ENCODE measurements at regions of chr9 and their contacts with region 1.

Region 1: DNA sequence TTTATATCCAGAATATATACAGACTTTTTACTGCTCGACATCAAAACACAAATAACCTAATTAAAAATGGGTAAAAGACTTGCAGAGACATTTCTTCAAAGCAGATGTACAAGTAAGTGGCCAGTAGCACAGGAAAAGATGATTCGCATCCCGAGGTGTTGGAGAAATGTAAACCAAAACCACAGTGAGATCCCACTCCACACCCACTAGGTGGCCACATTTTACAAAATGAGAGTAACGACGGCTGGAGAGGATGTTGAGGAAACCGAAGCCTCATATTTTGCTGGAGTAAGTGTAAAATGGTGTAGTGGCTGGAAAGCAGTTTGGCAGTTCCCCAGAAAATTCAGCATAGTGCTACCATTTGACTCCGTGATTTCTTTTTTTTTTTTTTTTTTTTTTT is 21.2 kb upstream of the GBGT1 start:
- DNase-seq: peak; percentile 43 to 76
- ATAC-seq: peak; percentile 57 to 77 (median 70)
- H3K4me3 ChIP-seq: no peak overlapping the region
- H3K4me3 Mint-ChIP-seq: peak overlapping the region; percentile 80
- H3K27ac ChIP-seq: no peak overlapping the region
- H3K27ac Mint-ChIP-seq: peak overlapping the region; percentile 62 to 78
- H3K4me1 ChIP-seq: peaks cover 19% of the 10 kb centered on the region
- H3K4me1 Mint-ChIP-seq: peaks cover 19% of the 10 kb centered on the region in 2 donors
- H3K27me3 ChIP-seq: no peaks in the 10 kb centered on the region
- H3K27me3 Mint-ChIP-seq: peaks cover 18 to 20% of the 10 kb centered on the region in 2 donors
- CTCF ChIP-seq: no peak

Region 2: GRCh38 chr9:133103183-133103986 is 81.6 kb before region 1 on chr9:
- intact Hi-C with region 1: loop called (anchors 1 kb)
- DNase-seq: peak; percentile 71
- ATAC-seq: peak; percentile 69 to 81 (median 80)
- H3K4me3 ChIP-seq: no peak overlapping the region
- H3K4me3 Mint-ChIP-seq: no peak overlapping the region
- H3K27ac ChIP-seq: peak overlapping the region; percentile 15
- H3K27ac Mint-ChIP-seq: peak overlapping the region; percentile 85 to 87
- H3K4me1 ChIP-seq: peaks cover 5% of the 10 kb centered on the region
- H3K4me1 Mint-ChIP-seq: peaks cover 0 to 6% of the 10 kb centered on the region in 2 donors
- H3K27me3 ChIP-seq: no peaks in the 10 kb centered on the region
- H3K27me3 Mint-ChIP-seq: no peaks in the 10 kb centered on the region
- CTCF ChIP-seq: peak; percentile 97

Region 3: DNA sequence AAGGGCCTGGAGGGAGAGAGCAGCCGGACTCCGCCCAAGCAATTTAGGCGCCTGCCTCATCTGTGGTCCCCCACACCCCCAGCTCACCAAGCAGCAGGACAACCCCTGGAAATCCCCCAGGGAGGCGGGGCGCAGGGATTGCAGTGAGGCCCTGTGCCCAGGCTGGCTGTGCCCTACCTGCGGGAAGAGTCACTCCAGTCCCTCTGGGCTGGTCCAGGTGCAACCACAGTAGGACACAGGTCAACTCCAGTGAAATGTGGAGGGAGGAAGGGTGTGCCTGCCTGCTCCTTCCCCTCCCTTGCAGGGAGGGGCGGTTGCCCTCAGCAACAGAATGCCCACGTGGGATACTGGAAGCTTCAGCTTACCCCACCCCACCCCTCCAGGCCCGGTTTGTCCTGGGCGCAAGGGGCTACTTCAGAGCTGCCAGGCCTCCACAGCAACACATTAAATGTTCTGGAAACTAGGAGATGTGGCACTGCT is 67.4 kb after region 1 on chr9:
- intact Hi-C with region 1: no loop called
- DNase-seq: no peak
- ATAC-seq: peak in 1 of 3 donors; percentile 64
- H3K4me3 ChIP-seq: no peak overlapping the region
- H3K4me3 Mint-ChIP-seq: no peak overlapping the region
- H3K27ac ChIP-seq: no peak overlapping the region
- H3K27ac Mint-ChIP-seq: peak overlapping the region in 1 of 2 donors; percentile 15
- H3K4me1 ChIP-seq: peaks cover 6% of the 10 kb centered on the region
- H3K4me1 Mint-ChIP-seq: peaks cover 6 to 7% of the 10 kb centered on the region in 2 donors
- H3K27me3 ChIP-seq: no peaks in the 10 kb centered on the region
- H3K27me3 Mint-ChIP-seq: peaks cover 0 to 12% of the 10 kb centered on the region in 2 donors
- CTCF ChIP-seq: no peak

Region 4: DNA sequence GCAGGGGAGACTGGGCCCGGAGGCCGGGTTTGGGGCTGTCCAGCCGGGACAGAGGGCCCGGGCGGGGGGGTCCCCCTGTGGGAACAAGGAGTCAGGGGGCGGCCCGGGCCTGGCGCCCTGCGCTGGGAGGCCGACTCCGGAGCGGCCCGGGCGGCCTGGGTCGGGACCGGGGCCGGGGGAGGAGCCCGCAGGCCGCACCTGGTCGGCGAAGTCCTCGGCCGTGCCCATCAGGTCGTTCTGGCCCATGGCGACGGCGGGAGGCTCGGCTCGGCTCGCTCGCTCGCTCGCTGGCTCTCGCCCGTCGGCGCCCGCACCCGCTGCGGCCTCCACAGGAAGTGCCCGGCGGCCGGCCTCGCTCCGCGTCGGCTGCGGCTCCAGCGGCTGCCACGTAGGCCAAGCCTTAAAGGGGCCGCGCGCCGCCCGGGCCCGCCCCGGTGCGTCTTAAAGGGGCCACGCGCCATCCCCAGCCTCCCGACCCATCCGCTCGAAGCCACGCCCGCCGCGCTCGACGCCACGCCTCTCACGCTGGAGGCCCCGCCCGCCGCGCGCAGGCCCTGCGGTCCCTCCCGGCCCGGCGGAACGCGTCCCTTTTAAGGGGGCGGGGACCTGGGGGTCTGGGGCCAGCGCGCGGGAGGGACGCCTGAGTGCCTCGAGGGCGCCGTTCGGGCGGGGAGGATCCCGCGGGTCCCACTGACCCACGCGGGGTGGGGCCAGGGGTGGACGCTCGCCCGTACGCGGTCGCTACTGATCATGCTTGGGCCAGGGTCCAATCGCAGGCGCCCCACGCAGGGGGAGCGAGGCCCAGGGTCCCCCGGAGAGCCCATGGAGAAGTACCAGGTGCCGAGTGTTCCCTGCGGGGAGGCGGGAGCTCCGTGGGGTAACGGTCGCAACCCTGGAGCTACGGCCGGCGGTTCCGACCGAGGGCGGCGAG is 191.0 kb after region 1 on chr9 and contains the starts of genes STKLD1 and SURF4:
- intact Hi-C with region 1: loop called (anchors 10 kb)
- DNase-seq: peak; percentile 95 to 96
- ATAC-seq: peak; percentile 84 to 95 (median 91)
- H3K4me3 ChIP-seq: peak within 1 kb of the TSS; percentile 72
- H3K4me3 Mint-ChIP-seq: peak within 1 kb of the TSS; percentile 96
- H3K27ac ChIP-seq: peak within 1 kb of the TSS; percentile 75
- H3K27ac Mint-ChIP-seq: peak within 1 kb of the TSS; percentile 95 to 96
- H3K4me1 ChIP-seq: peaks cover 47% of the 10 kb centered on the region
- H3K4me1 Mint-ChIP-seq: peaks cover 28 to 34% of the 10 kb centered on the region in 2 donors
- H3K27me3 ChIP-seq: no peaks in the 10 kb centered on the region
- H3K27me3 Mint-ChIP-seq: no peaks in the 10 kb centered on the region
- CTCF ChIP-seq: no peak
- total RNA-seq, gene STKLD1: 0.53 to 2.9 (median 1.1) TPM
- total RNA-seq, gene SURF4: 111 to 135 (median 114) TPM

Region 5: DNA sequence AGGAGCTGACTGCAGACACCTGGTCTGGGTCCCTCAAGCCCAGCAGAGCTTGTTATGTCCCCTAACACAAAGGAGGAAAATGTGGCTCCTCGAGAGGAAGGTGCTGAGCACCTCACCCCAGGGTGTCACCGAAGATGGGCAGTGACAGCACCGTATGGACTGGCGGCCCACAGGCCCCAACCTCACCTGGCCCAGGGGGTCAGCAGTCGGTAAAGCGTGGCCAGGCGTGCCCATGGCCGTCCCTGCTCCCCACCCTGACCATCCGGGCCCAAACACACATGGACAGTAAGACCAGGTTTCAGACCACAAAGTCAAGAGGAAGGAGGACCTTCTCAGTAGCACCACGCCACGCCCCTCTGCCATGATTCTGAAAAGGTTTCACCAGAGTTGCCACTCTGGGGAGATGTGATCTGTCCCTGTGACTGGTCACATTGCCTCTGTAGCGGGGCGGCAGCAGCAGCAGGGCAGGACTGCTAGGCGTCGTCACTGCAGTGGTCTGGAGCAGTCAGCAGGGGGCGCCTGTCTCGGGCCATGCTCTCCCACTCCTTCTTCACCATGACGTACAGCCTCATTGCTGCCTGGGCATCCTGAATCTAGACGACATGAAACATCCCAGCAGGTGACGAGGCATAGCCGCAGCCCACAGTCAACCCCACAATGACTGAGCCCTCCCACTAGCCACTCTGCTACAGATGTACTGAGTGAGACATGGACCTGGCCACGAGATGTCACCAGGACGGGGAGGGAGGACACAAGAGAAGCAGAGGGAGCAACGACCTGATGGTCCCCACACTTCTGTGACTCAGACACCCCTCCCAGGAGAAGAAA is 221.7 kb after region 1 on chr9:
- intact Hi-C with region 1: loop called (anchors 1 kb)
- DNase-seq: peak; percentile 68 to 88
- ATAC-seq: peak; percentile 83 to 96 (median 87)
- H3K4me3 ChIP-seq: no peak overlapping the region
- H3K4me3 Mint-ChIP-seq: no peak overlapping the region
- H3K27ac ChIP-seq: no peak overlapping the region
- H3K27ac Mint-ChIP-seq: peak overlapping the region in 1 of 2 donors; percentile 45
- H3K4me1 ChIP-seq: no peaks in the 10 kb centered on the region
- H3K4me1 Mint-ChIP-seq: peaks cover 0 to 5% of the 10 kb centered on the region in 2 donors
- H3K27me3 ChIP-seq: no peaks in the 10 kb centered on the region
- H3K27me3 Mint-ChIP-seq: no peaks in the 10 kb centered on the region
- CTCF ChIP-seq: peak; percentile 85

Region 6: GRCh38 chr9:133485361-133486260 is 300.6 kb after region 1 on chr9:
- intact Hi-C with region 1: loop called (anchors 1 kb)
- DNase-seq: no peak
- ATAC-seq: peak in 2 of 3 donors; percentile 46 to 57
- H3K4me3 ChIP-seq: no peak overlapping the region
- H3K4me3 Mint-ChIP-seq: peak overlapping the region; percentile 37
- H3K27ac ChIP-seq: no peak overlapping the region
- H3K27ac Mint-ChIP-seq: no peak overlapping the region
- H3K4me1 ChIP-seq: peaks cover 6% of the 10 kb centered on the region
- H3K4me1 Mint-ChIP-seq: peaks cover 0 to 4% of the 10 kb centered on the region in 2 donors
- H3K27me3 ChIP-seq: no peaks in the 10 kb centered on the region
- H3K27me3 Mint-ChIP-seq: peaks cover 3 to 7% of the 10 kb centered on the region in 2 donors
- CTCF ChIP-seq: no peak

Measured in natural killer cell (primary cell).